HCT116 (cell line): ENCODE measurements at regions of chr6 and their contacts with region 1.

Region 1: DNA sequence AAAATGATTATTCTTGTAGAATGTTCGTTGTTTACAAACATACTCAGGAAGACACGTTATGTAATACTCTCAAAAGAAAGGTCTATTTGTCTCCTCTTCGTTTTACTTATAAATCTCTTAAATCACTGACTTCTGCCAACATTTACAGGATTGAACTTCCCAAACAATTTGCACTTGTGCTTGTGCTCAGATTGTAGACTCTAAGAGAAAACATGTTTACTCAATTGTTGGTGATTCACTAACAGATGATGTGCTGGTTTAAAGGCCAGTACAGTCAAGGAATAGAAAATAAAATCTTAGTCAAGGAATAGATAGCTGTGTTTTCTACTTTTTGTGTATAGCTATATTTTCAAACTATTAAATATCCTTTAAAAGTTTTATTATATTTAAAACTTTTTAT is 172.8 kb downstream of the GJA1 start:
- DNase-seq: no peak
- ATAC-seq: no peak
- H3K4me3 ChIP-seq: no peak overlapping the region
- H3K27ac ChIP-seq: no peak overlapping the region
- H3K4me1 ChIP-seq: no peaks in the 10 kb centered on the region
- H3K27me3 ChIP-seq: no peaks in the 10 kb centered on the region
- CTCF ChIP-seq: no peak
- POLR2A ChIP-seq: no peak
- RAD21 ChIP-seq: no peak

Region 2: DNA sequence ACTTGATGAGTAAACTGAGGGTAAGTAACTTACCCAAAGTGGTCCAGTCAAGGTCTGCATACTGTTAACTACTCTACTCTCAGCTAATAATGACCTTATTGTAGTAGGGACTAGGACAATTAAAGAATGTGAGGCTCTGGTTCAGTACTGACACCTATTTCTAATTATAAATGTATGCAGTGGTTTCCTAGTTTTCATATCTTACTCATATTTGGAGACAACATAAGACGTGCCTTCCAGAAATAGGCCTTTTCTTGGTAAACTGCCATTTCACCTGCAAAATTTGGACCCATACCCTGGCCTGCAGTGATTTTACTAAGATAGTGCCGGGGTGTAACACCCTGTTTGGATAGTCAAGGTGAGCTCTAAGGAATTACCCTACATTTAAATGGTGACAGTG is 148.1 kb before region 1 on chr6:
- CTCF ChIA-PET with region 1: no interaction called
- POLR2A ChIA-PET with region 1: no interaction called
- RAD21 ChIA-PET with region 1: no interaction called
- intact Hi-C with region 1: loop called (anchors 10 kb)
- DNase-seq: no peak
- ATAC-seq: no peak
- H3K4me3 ChIP-seq: no peak overlapping the region
- H3K27ac ChIP-seq: no peak overlapping the region
- H3K4me1 ChIP-seq: no peaks in the 10 kb centered on the region
- H3K27me3 ChIP-seq: no peaks in the 10 kb centered on the region
- CTCF ChIP-seq: no peak
- POLR2A ChIP-seq: no peak
- RAD21 ChIP-seq: no peak

Region 3: GRCh38 chr6:121584586-121585369 is 23.5 kb before region 1 on chr6:
- CTCF ChIA-PET with region 1: no interaction called
- POLR2A ChIA-PET with region 1: no interaction called
- RAD21 ChIA-PET with region 1: no interaction called
- intact Hi-C with region 1: no loop called
- DNase-seq: no peak
- ATAC-seq: no peak
- H3K4me3 ChIP-seq: no peak overlapping the region
- H3K27ac ChIP-seq: no peak overlapping the region
- H3K4me1 ChIP-seq: no peaks in the 10 kb centered on the region
- H3K27me3 ChIP-seq: no peaks in the 10 kb centered on the region
- CTCF ChIP-seq: no peak
- POLR2A ChIP-seq: no peak
- RAD21 ChIP-seq: no peak